ENCODE measurements at regions of chr1 and their contacts with region 1.

Region 1: GRCh38 chr1:114757455-114758250 is at the start of gene CSDE1:
- DNase-seq: peak; percentile 98
- ATAC-seq: peak; percentile 87
- H3K4me3 Mint-ChIP-seq: peak within 1 kb of the TSS; percentile 99
- H3K27ac Mint-ChIP-seq: peak within 1 kb of the TSS; percentile 99
- H3K4me1 Mint-ChIP-seq: peaks cover 53% of the 10 kb centered on the region
- H3K27me3 Mint-ChIP-seq: no peaks in the 10 kb centered on the region
- total RNA-seq, gene CSDE1: 458 to 553 TPM

Region 2: DNA sequence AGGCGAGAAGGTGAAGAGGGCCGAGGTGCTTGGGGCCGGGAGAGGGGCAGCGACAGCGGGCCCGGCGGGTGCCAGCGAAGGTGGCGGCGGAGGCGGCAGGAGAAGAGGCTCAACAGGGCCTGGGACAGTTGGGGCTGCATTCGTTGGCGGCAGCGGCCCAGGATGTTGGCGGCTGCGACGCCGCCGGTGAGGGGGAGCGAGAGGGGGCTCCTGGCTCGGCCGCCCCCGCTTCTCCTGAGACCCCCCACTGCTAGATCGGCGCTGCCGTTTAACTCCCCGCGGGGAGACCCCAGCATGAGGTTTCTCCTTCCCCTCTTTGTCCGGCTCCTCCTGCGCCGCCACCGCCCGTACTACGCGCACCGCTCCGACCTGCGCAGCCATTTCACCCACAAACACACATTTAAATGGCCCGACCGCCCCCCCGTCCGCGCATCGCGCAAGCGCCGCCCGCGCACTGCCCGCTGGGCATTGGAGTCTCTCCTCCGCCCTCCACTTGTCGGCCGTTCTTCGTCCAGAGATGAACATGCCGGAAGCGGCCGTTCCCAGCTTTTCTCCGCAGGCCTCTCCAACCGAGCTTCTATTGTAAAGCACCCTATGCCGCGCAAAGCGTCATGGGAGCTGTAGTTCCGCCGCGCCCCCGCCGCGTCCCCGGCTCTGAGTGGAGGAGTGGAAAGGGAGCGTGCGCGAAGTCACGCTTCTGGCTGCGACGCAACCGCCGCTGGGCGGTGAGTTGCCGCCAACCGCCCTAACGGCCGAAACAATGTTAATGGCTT is 945.6 kb before region 1 on chr1 and contains the start of gene RSBN1:
- CTCF ChIA-PET with region 1: no interaction called
- POLR2A ChIA-PET with region 1: no interaction called
- intact Hi-C with region 1: loop called in 1 of 2 experiments (anchors 2 kb)
- DNase-seq: peak; percentile 99
- ATAC-seq: peak; percentile 97
- H3K4me3 Mint-ChIP-seq: peak within 1 kb of the TSS; percentile 97
- H3K27ac Mint-ChIP-seq: peak within 1 kb of the TSS; percentile 97
- H3K4me1 Mint-ChIP-seq: peaks cover 33% of the 10 kb centered on the region
- H3K27me3 Mint-ChIP-seq: no peaks in the 10 kb centered on the region
- total RNA-seq, gene RSBN1: 22.1 to 24.3 TPM

Region 3: DNA sequence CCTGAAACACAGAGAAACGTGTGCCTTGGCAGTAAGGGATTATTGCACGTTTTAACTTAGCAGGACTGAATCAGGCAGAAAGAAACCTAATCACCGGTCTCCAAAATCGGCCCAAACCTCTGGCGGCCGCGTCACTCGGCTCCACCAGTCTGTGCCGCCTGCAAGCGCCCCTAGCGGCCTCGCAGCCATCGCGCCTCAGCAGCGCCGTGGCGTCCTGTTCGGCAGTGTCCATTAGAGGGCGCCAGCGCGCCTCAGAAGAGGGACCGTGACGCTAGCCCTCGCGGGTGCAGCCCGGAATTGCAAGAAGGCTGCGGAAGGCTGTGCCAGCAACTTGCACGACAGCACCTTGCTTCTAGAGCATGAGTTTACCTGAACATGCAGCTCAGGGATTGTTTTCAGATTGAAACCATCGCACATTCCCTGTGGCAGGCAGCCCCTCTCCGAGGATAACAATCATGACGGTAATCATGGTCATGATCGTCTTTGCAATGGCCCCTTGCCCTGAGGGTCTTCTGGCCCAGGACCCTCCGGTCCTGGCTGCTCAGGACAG is 411.1 kb before region 1 on chr1:
- CTCF ChIA-PET with region 1: no interaction called
- POLR2A ChIA-PET with region 1: no interaction called
- intact Hi-C with region 1: loop called in 1 of 2 experiments (anchors 1 kb)
- DNase-seq: peak; percentile 98
- ATAC-seq: peak; percentile 98
- H3K4me3 Mint-ChIP-seq: peak overlapping the region; percentile 71
- H3K27ac Mint-ChIP-seq: peak overlapping the region; percentile 95
- H3K4me1 Mint-ChIP-seq: peaks cover 26% of the 10 kb centered on the region
- H3K27me3 Mint-ChIP-seq: no peaks in the 10 kb centered on the region

Region 4: GRCh38 chr1:114670083-114671010 is 87.3 kb before region 1 on chr1:
- CTCF ChIA-PET with region 1: no interaction called
- POLR2A ChIA-PET with region 1: no interaction called
- intact Hi-C with region 1: loop called in 1 of 2 experiments (anchors 1 kb)
- DNase-seq: peak; percentile 93
- ATAC-seq: peak; percentile 97
- H3K4me3 Mint-ChIP-seq: peak overlapping the region; percentile 84
- H3K27ac Mint-ChIP-seq: peak overlapping the region; percentile 63
- H3K4me1 Mint-ChIP-seq: peaks cover 11% of the 10 kb centered on the region
- H3K27me3 Mint-ChIP-seq: peaks cover 15% of the 10 kb centered on the region

Region 5: GRCh38 chr1:114780344-114781226 is 22.9 kb after region 1 on chr1 and contains the start of gene SIKE1:
- CTCF ChIA-PET with region 1: interaction called, 3 read pairs
- POLR2A ChIA-PET with region 1: interaction called, 3 read pairs
- intact Hi-C with region 1: loop called (anchors 1 kb)
- DNase-seq: peak; percentile 96
- ATAC-seq: peak; percentile 100
- H3K4me3 Mint-ChIP-seq: peak within 1 kb of the TSS; percentile 100
- H3K27ac Mint-ChIP-seq: peak within 1 kb of the TSS; percentile 97
- H3K4me1 Mint-ChIP-seq: peaks cover 21% of the 10 kb centered on the region
- H3K27me3 Mint-ChIP-seq: no peaks in the 10 kb centered on the region
- total RNA-seq, gene SIKE1: 56.9 to 67.2 TPM

Region 6: GRCh38 chr1:115189814-115190539 is 432.3 kb after region 1 on chr1:
- CTCF ChIA-PET with region 1: no interaction called
- POLR2A ChIA-PET with region 1: no interaction called
- intact Hi-C with region 1: no loop called
- DNase-seq: no peak
- ATAC-seq: no peak
- H3K4me3 Mint-ChIP-seq: no peak overlapping the region
- H3K27ac Mint-ChIP-seq: no peak overlapping the region
- H3K4me1 Mint-ChIP-seq: peaks cover 1% of the 10 kb centered on the region
- H3K27me3 Mint-ChIP-seq: peaks cover 11% of the 10 kb centered on the region

Region 7: GRCh38 chr1:116418091-116418830 is 1660.6 kb after region 1 on chr1:
- CTCF ChIA-PET with region 1: no interaction called
- POLR2A ChIA-PET with region 1: no interaction called
- intact Hi-C with region 1: loop called in 1 of 2 experiments (anchors 5 kb)
- DNase-seq: peak; percentile 92
- ATAC-seq: peak; percentile 88
- H3K4me3 Mint-ChIP-seq: peak overlapping the region; percentile 92
- H3K27ac Mint-ChIP-seq: peak overlapping the region; percentile 88
- H3K4me1 Mint-ChIP-seq: peaks cover 32% of the 10 kb centered on the region
- H3K27me3 Mint-ChIP-seq: no peaks in the 10 kb centered on the region